OCI-LY7 (cell line): ENCODE measurements at regions of chr11 and their contacts with region 1.

Region 1: DNA sequence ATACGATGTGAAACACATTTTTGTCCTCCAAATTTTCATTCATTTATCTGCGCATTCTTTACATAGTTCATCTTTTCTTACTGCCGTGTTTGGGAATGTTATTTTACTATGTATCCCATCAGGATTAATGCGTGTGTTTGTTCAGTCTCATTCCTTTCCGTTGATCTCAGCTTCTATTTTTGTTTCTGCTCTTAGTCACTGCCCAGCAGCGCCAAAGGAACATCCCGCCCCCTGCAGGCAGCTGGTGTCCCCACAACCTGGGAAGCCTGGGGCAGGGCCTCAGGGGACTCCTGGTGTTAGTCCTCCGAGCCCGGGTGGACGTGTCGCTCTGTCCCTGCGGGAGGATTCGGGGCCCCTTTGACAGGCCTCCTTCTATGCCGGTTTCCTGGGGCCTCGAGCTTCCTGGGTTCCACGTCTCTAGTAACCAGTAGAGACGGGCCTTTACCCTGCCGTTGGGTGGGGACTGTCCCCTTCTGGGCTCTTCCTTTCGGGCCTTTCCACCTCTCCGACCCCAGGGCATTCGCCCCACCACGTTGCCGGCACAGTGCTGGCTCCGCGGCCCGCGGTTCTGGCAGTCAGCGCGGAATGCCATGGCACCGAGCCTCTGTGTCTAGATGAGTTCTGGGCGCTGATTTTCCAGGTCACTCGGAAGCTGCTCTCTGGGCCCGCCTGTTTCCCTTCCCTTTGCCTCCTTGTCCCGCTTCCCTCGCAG is 39.8 kb downstream of the WEE1 start:
- DNase-seq: peak; percentile 92
- H3K4me3 ChIP-seq: peak overlapping the region; percentile 72
- H3K27ac ChIP-seq: peak overlapping the region; percentile 99
- H3K4me1 ChIP-seq: peaks cover 96% of the 10 kb centered on the region
- CTCF ChIP-seq: peak; percentile 99

Region 2: GRCh38 chr11:9293646-9294045 is 319.6 kb before region 1 on chr11:
- CTCF ChIA-PET with region 1: no interaction called
- POLR2A ChIA-PET with region 1: no interaction called
- intact Hi-C with region 1: no loop called
- DNase-seq: no peak
- H3K4me3 ChIP-seq: no peak overlapping the region
- H3K27ac ChIP-seq: no peak overlapping the region
- H3K4me1 ChIP-seq: no peaks in the 10 kb centered on the region
- CTCF ChIP-seq: no peak

Region 3: DNA sequence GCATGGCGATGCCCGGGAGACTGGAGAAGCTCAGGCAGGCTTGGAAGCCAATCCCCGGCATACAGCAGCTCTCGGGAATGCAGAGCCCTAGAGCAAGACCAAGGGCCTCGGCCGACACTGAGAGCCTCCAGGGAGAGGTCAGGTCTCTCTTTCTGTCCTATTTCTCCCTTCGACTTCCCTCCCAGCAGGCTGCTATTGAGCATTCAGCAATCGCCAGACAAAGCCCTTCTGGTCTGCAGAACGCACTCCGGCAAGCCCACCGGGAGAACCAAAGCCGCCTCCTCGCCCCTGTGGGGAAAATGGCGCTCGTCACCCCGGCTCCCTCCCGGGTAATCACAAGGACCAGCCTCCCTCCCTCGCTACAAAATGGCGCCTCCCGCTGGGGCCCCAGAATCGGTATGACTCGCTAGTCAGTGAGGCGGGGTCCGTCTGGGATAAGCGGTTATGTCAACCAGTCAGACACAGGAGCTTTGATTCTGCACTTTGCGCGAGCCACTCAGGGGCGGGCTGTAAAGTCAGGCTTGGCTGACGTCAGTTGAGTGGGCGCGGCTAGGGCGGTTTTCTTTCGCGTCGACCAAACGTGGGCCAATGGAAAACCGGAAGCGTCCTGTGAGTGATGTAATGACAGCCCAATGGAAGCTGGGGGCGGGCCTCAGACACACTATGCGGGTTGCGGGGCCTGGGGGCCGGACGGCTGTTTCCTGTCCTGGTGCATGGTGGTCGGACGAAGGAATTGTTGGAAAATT is 152.8 kb before region 1 on chr11 and contains the start of gene ZNF143:
- CTCF ChIA-PET with region 1: no interaction called
- POLR2A ChIA-PET with region 1: interaction called, 4 read pairs
- intact Hi-C with region 1: loop called (anchors 1 kb)
- DNase-seq: peak; percentile 100
- H3K4me3 ChIP-seq: peak within 1 kb of the TSS; percentile 97
- H3K27ac ChIP-seq: peak within 1 kb of the TSS; percentile 97
- H3K4me1 ChIP-seq: peaks cover 28% of the 10 kb centered on the region
- CTCF ChIP-seq: no peak
- total RNA-seq, gene ZNF143: 25.0 and 36.2 TPM in 2 replicates

Region 4: DNA sequence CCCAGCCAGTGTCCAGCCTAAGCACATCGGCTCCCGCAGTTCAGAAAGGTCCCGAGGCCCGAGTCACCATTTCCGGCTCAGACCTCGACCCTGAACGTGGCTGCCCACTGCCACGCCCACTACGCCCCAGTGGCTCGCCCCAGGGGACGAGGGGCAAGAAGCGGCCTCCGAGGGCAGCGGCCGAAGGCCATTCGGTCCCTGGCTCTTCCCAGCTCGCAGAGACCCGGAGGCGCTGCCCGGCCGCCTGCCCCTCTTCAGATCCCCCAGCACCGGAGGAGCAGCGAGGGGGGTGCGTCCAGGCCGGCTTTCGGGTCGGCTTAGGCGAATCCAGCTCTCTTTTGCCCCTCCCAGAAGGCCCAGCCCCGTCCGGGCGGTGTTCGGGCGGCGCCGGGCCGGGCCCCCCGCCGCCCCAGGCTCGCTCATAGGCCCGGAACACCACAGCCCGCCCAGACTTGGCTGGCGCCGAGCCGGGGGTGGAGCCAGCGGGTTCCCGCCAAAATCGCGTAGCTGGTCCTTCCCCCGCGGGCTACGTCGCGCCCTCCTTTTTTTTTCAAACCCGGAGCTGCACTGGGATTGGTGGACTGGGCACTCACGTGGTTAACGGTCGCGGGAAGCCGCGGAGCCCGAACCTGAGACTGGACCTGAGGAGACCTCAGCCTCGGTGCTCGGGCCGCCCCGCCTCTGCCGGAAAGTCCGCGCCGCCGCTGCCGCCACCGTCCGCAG is 40.1 kb before region 1 on chr11 and contains the start of gene WEE1:
- CTCF ChIA-PET with region 1: interaction called, 9 read pairs
- POLR2A ChIA-PET with region 1: interaction called, 48 read pairs
- intact Hi-C with region 1: loop called (anchors 1 kb)
- DNase-seq: peak; percentile 99
- H3K4me3 ChIP-seq: peak within 1 kb of the TSS; percentile 99
- H3K27ac ChIP-seq: peak within 1 kb of the TSS; percentile 78
- H3K4me1 ChIP-seq: peaks cover 54% of the 10 kb centered on the region
- CTCF ChIP-seq: no peak
- total RNA-seq, gene WEE1: 141 and 147 TPM in 2 replicates

Region 5: GRCh38 chr11:9625162-9625561 is 11.9 kb after region 1 on chr11:
- CTCF ChIA-PET with region 1: no interaction called
- POLR2A ChIA-PET with region 1: interaction called, 28 read pairs
- intact Hi-C with region 1: no loop called
- DNase-seq: no peak
- H3K4me3 ChIP-seq: no peak overlapping the region
- H3K27ac ChIP-seq: no peak overlapping the region
- H3K4me1 ChIP-seq: peaks cover 42% of the 10 kb centered on the region
- CTCF ChIP-seq: no peak

Region 6: GRCh38 chr11:9748361-9748970 is 135.2 kb after region 1 on chr11:
- CTCF ChIA-PET with region 1: interaction called, 4 read pairs
- POLR2A ChIA-PET with region 1: interaction called, 28 read pairs
- intact Hi-C with region 1: loop called (anchors 1 kb)
- DNase-seq: peak; percentile 88
- H3K4me3 ChIP-seq: peak overlapping the region; percentile 26
- H3K27ac ChIP-seq: peak overlapping the region; percentile 96
- H3K4me1 ChIP-seq: peaks cover 75% of the 10 kb centered on the region
- CTCF ChIP-seq: peak; percentile 94

Region 7: GRCh38 chr11:10314199-10315072 is 701.2 kb after region 1 on chr11:
- CTCF ChIA-PET with region 1: no interaction called
- POLR2A ChIA-PET with region 1: no interaction called
- intact Hi-C with region 1: loop called (anchors 5 kb)
- DNase-seq: peak; percentile 92
- H3K4me3 ChIP-seq: peak overlapping the region; percentile 50
- H3K27ac ChIP-seq: peak overlapping the region; percentile 93
- H3K4me1 ChIP-seq: peaks cover 96% of the 10 kb centered on the region
- CTCF ChIP-seq: no peak